ENCODE measurements at regions of chr11 and their contacts with region 1.

Region 1: DNA sequence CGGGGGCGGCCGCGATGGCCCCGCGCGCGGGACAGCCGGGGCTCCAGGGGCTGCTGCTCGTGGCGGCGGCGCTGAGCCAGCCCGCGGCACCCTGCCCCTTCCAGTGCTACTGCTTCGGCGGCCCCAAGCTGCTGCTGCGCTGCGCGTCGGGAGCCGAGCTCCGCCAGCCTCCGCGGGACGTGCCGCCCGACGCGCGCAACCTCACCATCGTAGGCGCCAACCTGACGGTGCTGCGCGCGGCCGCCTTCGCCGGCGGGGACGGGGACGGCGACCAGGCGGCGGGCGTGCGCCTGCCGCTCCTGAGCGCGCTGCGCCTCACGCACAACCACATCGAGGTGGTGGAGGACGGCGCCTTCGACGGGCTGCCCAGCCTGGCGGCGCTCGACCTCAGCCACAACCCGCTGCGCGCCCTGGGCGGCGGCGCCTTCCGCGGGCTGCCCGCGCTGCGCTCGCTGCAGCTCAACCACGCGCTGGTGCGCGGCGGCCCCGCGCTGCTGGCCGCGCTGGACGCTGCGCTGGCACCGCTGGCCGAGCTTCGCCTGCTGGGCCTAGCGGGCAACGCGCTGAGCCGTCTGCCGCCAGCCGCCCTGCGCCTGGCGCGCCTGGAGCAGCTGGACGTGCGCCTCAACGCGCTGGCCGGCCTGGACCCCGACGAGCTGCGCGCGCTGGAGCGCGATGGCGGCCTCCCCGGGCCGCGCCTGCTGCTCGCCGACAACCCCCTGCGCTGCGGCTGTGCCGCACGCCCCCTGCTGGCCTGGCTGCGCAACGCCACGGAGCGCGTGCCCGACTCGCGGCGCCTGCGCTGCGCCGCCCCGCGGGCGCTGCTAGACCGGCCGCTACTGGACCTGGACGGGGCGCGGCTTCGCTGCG is 697 bp downstream of the TPBGL start:
- DNase-seq: peak; percentile 85
- ATAC-seq: peak; percentile 93 to 95

Region 2: DNA sequence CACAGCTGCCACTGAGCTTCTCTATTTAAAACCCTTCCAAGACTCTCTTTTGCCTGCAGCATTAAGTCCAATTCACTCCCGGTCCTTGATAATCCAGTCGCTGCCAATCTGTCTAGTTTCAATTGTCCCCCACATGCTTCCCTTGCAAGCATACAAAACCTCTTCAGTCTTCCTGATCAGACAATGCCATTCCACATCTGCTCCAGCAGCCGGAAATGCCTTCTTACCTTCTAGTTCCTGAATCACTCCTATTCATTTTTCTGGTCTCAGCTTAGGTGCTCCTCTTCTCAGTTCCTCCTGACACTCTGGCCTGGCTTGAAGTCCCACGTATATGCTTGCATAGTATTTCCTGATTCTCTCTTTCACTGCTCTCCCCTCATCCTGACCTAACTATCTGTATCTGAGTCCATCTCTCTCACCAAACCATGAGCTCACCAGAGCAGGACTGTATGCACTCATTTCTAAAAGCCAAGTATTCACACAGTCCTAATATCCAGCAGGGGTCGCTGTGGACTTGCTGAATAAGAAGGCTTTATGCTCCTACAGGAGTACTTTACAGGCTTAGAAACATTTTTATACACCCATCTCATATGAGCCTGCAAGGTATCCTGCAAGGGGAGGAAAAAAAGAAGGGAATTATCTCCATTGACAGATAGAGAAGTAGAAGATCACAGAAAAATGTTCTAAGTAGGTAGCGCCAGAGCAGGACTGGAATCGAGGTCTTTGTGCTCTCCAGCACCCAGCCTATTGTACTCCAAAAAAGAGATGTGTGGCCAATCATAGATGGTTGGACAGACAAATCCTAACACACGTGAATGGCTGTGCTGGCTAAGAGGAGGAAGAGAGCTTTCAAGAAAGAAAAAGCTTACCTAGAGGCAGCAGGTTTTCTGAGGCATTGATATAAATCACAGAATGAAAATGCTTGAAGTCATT is 311.6 kb before region 1 on chr11:
- intact Hi-C with region 1: loop called (anchors 5 to 10 kb)
- DNase-seq: peak; percentile 63
- ATAC-seq: peak; percentile 84 to 87

Measured in left cardiac atrium (tissue), 4 donors.